Natural killer cell (primary cell): ENCODE measurements at regions of chr11 and their contacts with region 1.

Region 1: GRCh38 chr11:14892036-14892567 is at the start of gene CYP2R1:
- DNase-seq: peak; percentile 90 to 94
- ATAC-seq: peak; percentile 79 to 94 (median 86)
- H3K4me3 ChIP-seq: peak within 1 kb of the TSS; percentile 87
- H3K4me3 Mint-ChIP-seq: peak within 1 kb of the TSS; percentile 96
- H3K27ac ChIP-seq: peak within 1 kb of the TSS; percentile 92
- H3K27ac Mint-ChIP-seq: peak within 1 kb of the TSS; percentile 95 to 98
- H3K4me1 ChIP-seq: peaks cover 11% of the 10 kb centered on the region
- H3K4me1 Mint-ChIP-seq: peaks cover 22 to 40% of the 10 kb centered on the region in 2 donors
- H3K27me3 ChIP-seq: no peaks in the 10 kb centered on the region
- H3K27me3 Mint-ChIP-seq: no peaks in the 10 kb centered on the region
- CTCF ChIP-seq: no peak
- total RNA-seq, gene CYP2R1: 14.9 to 20.3 (median 16.2) TPM

Region 2: GRCh38 chr11:14499554-14500180 is 392.4 kb before region 1 on chr11 and contains the start of gene COPB1:
- intact Hi-C with region 1: loop called (anchors 5 kb)
- DNase-seq: peak; percentile 93 to 96
- ATAC-seq: peak; percentile 91 to 98 (median 94)
- H3K4me3 ChIP-seq: peak within 1 kb of the TSS; percentile 94
- H3K4me3 Mint-ChIP-seq: peak within 1 kb of the TSS; percentile 98
- H3K27ac ChIP-seq: peak within 1 kb of the TSS; percentile 89
- H3K27ac Mint-ChIP-seq: peak within 1 kb of the TSS; percentile 96 to 97
- H3K4me1 ChIP-seq: peaks cover 4% of the 10 kb centered on the region
- H3K4me1 Mint-ChIP-seq: peaks cover 36 to 46% of the 10 kb centered on the region in 2 donors
- H3K27me3 ChIP-seq: no peaks in the 10 kb centered on the region
- H3K27me3 Mint-ChIP-seq: no peaks in the 10 kb centered on the region
- CTCF ChIP-seq: no peak
- total RNA-seq, gene COPB1: 77.1 to 83.8 (median 80.4) TPM

Region 3: DNA sequence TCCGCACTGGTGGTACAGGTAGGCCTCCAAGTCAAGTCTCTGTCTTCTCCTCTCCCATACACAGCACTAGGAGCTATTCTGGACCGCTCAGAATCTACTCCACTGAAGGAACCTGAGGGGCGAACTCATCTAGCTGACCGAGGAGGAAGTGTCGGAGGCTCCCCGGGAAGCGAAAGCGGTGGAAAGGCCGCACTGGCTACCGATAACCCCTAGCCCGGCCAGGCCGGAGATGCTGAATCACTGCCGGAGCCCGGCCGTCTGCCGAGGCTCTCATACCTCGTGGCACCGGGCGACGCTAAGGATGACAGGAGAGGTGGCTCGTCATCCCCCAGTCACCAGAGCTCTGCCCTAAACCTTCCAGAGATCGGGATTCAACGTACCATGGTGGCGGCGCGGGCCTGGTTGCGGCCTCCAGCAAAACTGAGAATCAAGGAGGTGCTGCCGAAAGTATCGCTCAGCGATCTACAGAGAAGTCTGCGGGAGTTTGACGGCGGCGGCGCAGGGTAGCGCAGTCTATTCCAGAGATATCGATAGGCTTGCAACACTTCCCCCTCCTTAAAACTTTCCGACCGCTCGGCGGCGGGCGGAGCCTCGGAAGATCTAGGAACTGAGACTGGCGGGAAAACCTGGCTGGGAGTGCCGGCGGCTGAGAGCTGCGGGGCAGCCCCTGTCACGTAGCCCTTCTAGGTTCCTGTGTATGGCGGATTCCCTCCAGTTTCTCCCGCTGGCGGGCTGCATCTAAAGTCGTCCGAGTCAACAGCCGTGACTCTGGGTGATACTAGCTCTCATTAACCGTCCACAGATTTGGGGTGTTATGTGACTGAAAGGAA is 372.0 kb before region 1 on chr11 and contains the start of gene PSMA1:
- intact Hi-C with region 1: loop called (anchors 1 kb)
- DNase-seq: peak; percentile 86 to 94
- ATAC-seq: peak; percentile 90 to 98 (median 94)
- H3K4me3 ChIP-seq: peak within 1 kb of the TSS; percentile 77
- H3K4me3 Mint-ChIP-seq: peak within 1 kb of the TSS; percentile 97
- H3K27ac ChIP-seq: peak within 1 kb of the TSS; percentile 87
- H3K27ac Mint-ChIP-seq: peak within 1 kb of the TSS; percentile 95 to 97
- H3K4me1 ChIP-seq: peaks cover 6% of the 10 kb centered on the region
- H3K4me1 Mint-ChIP-seq: peaks cover 26 to 28% of the 10 kb centered on the region in 2 donors
- H3K27me3 ChIP-seq: no peaks in the 10 kb centered on the region
- H3K27me3 Mint-ChIP-seq: no peaks in the 10 kb centered on the region
- CTCF ChIP-seq: no peak
- total RNA-seq, gene PSMA1: 143 to 176 (median 155) TPM

Region 4: GRCh38 chr11:14537134-14537599 is 354.9 kb before region 1 on chr11:
- intact Hi-C with region 1: loop called (anchors 5 kb)
- DNase-seq: peak in 1 of 2 donors; percentile 76
- ATAC-seq: peak; percentile 84 to 91 (median 86)
- H3K4me3 ChIP-seq: no peak overlapping the region
- H3K4me3 Mint-ChIP-seq: no peak overlapping the region
- H3K27ac ChIP-seq: no peak overlapping the region
- H3K27ac Mint-ChIP-seq: peak overlapping the region in 1 of 2 donors; percentile 76
- H3K4me1 ChIP-seq: no peaks in the 10 kb centered on the region
- H3K4me1 Mint-ChIP-seq: no peaks in the 10 kb centered on the region
- H3K27me3 ChIP-seq: no peaks in the 10 kb centered on the region
- H3K27me3 Mint-ChIP-seq: no peaks in the 10 kb centered on the region
- CTCF ChIP-seq: peak; percentile 91

Region 5: DNA sequence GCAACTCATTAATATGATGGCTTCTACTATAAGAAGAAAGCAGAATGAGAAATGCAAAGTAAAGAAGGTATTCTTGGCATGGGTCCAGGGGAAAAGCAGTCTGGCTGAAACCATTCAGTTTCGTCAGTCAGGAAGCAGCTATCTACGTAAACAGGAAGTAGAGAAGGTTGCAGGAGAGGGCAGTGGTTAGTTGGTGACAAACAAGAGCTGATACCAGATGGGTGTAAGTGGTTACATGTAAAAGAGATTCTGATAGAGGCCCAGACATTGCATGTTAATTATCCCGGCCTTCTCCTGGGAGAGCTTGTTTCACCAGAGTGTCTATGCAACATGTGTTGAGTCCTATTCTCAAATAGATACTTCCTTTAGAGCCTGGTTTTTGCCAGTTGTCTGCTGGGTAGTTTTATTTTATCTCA is 313.6 kb before region 1 on chr11:
- intact Hi-C with region 1: loop called (anchors 2 kb)
- DNase-seq: peak; percentile 45 to 97
- ATAC-seq: peak; percentile 90 to 99 (median 99)
- H3K4me3 ChIP-seq: no peak overlapping the region
- H3K4me3 Mint-ChIP-seq: peak overlapping the region; percentile 78
- H3K27ac ChIP-seq: peak overlapping the region; percentile 96
- H3K27ac Mint-ChIP-seq: peak overlapping the region; percentile 85 to 98
- H3K4me1 ChIP-seq: peaks cover 22% of the 10 kb centered on the region
- H3K4me1 Mint-ChIP-seq: peaks cover 49 to 51% of the 10 kb centered on the region in 2 donors
- H3K27me3 ChIP-seq: no peaks in the 10 kb centered on the region
- H3K27me3 Mint-ChIP-seq: no peaks in the 10 kb centered on the region
- CTCF ChIP-seq: no peak

Region 6: GRCh38 chr11:14643697-14644225 is 248.3 kb before region 1 on chr11 and contains the start of gene PDE3B:
- intact Hi-C with region 1: loop called (anchors 5 kb)
- DNase-seq: peak; percentile 66 to 83
- ATAC-seq: peak; percentile 79 to 88 (median 80)
- H3K4me3 ChIP-seq: peak within 1 kb of the TSS; percentile 87
- H3K4me3 Mint-ChIP-seq: peak within 1 kb of the TSS; percentile 81
- H3K27ac ChIP-seq: peak within 1 kb of the TSS; percentile 70
- H3K27ac Mint-ChIP-seq: peak within 1 kb of the TSS in 1 of 2 donors; percentile 86
- H3K4me1 ChIP-seq: peaks cover 12% of the 10 kb centered on the region
- H3K4me1 Mint-ChIP-seq: peaks cover 21 to 31% of the 10 kb centered on the region in 2 donors
- H3K27me3 ChIP-seq: peaks cover 35% of the 10 kb centered on the region
- H3K27me3 Mint-ChIP-seq: peaks cover 11 to 38% of the 10 kb centered on the region in 2 donors
- CTCF ChIP-seq: no peak
- total RNA-seq, gene PDE3B: 18.2 to 42.3 (median 34.5) TPM